ENCODE measurements at regions of chr20 and their contacts with region 1.

Region 1: DNA sequence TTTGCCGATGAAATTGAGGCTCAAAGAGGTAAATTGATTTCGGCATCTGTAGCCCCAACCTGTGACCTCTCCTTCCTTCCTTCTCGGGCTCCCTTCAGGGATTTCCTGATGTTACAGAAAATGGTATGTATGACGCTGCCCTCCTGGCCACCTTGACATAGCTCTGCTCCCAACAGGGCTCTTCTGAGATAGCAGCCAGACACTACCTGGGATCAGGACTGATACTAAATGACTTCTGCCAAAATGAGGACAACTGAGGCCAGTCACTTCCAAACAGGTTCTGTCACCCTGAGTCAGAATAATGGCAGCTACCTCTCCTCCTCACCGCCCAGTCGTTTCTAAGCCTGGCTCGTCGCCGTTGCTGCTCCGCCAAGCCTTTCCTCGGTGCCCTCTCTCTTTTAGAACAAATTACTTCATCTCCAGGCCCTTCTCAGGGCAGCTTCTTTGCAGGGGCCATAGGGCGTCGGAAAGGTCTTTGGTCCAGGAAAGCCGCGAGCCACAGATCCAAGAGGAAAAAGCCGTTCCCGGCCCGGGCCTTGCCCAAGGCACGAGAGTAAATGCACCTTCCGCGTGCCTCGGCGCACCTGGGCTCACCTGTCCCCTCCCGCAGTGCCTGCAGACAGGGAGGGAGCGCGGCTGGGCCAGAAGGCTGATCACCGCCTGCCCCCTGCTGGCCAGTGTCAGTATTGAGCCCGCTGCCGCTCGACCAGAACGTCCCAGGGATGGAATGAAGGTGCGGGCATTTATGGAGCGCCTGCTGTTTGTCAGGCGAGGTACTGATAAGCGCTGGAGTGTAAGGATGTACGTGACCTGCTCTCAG is 904 bp upstream of the LPIN3 start:
- DNase-seq: peak; percentile 85
- ATAC-seq: peak; percentile 90
- H3K4me3 Mint-ChIP-seq: peak overlapping the region; percentile 76
- H3K27ac Mint-ChIP-seq: peak overlapping the region; percentile 41
- H3K4me1 Mint-ChIP-seq: peaks cover 10% of the 10 kb centered on the region
- H3K27me3 Mint-ChIP-seq: peaks cover 4% of the 10 kb centered on the region
- CTCF ChIP-seq: peak; percentile 99

Region 2: GRCh38 chr20:40970201-40970600 is 369.5 kb before region 1 on chr20:
- CTCF ChIA-PET with region 1: interaction called, 3 read pairs
- POLR2A ChIA-PET with region 1: interaction called, 6 read pairs
- intact Hi-C with region 1: loop called (anchors 1 kb)
- DNase-seq: no peak
- ATAC-seq: no peak
- H3K4me3 Mint-ChIP-seq: no peak overlapping the region
- H3K27ac Mint-ChIP-seq: no peak overlapping the region
- H3K4me1 Mint-ChIP-seq: peaks cover 14% of the 10 kb centered on the region
- H3K27me3 Mint-ChIP-seq: peaks cover 2% of the 10 kb centered on the region
- CTCF ChIP-seq: no peak

Region 3: DNA sequence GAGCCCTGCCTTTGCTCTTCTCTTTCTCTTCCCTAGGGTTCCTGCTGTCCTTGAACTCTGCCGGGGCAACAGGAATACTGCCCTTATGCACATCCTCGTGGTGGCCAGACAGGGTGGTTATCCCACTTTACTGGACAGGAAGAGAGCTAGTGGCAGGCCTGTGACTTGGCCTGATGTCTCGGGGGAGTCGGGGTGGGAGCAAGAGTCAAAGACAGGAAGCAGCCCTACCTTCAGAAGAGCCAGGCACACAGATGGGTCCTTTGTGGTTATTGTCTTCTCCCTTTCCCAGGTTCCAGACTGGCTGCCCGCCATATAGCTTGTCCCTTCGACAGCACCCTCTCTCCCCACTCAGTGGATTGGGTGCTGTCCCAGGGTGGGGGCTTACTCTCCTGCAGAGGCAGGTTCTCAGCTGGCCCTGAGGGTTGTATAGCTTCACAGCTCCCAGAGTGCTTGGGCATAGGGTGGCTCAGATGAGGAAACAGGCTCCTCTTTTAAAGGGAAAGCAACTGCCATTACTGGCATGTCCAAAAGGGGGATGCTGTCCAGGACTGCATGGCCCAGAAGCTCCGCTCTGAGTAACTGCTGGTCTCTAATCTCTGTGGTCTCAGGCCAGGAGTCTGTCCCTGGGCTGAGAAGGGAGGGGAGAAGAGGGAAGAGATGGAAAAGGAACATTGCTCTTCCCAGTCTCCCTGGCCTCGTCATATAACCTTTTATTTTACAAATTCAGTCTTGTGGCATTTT is 185.1 kb before region 1 on chr20:
- CTCF ChIA-PET with region 1: interaction called, 17 read pairs
- POLR2A ChIA-PET with region 1: no interaction called
- intact Hi-C with region 1: no loop called
- DNase-seq: no peak
- ATAC-seq: no peak
- H3K4me3 Mint-ChIP-seq: no peak overlapping the region
- H3K27ac Mint-ChIP-seq: peak overlapping the region; percentile 80
- H3K4me1 Mint-ChIP-seq: peaks cover 72% of the 10 kb centered on the region
- H3K27me3 Mint-ChIP-seq: no peaks in the 10 kb centered on the region
- CTCF ChIP-seq: no peak

Region 4: GRCh38 chr20:41232973-41233926 is 106.5 kb before region 1 on chr20:
- CTCF ChIA-PET with region 1: interaction called, 16 read pairs
- POLR2A ChIA-PET with region 1: no interaction called
- intact Hi-C with region 1: loop called (anchors 1 kb)
- DNase-seq: no peak
- ATAC-seq: peak; percentile 56
- H3K4me3 Mint-ChIP-seq: no peak overlapping the region
- H3K27ac Mint-ChIP-seq: peak overlapping the region; percentile 36
- H3K4me1 Mint-ChIP-seq: peaks cover 26% of the 10 kb centered on the region
- H3K27me3 Mint-ChIP-seq: no peaks in the 10 kb centered on the region
- CTCF ChIP-seq: no peak

Region 5: GRCh38 chr20:41308290-41308711 is 31.4 kb before region 1 on chr20:
- CTCF ChIA-PET with region 1: interaction called, 21 read pairs
- POLR2A ChIA-PET with region 1: no interaction called
- intact Hi-C with region 1: no loop called
- DNase-seq: no peak
- ATAC-seq: no peak
- H3K4me3 Mint-ChIP-seq: no peak overlapping the region
- H3K27ac Mint-ChIP-seq: no peak overlapping the region
- H3K4me1 Mint-ChIP-seq: peaks cover 28% of the 10 kb centered on the region
- H3K27me3 Mint-ChIP-seq: no peaks in the 10 kb centered on the region
- CTCF ChIP-seq: no peak

Region 6: GRCh38 chr20:41411391-41411847 is 71.7 kb after region 1 on chr20:
- CTCF ChIA-PET with region 1: no interaction called
- POLR2A ChIA-PET with region 1: no interaction called
- intact Hi-C with region 1: loop called (anchors 2 kb)
- DNase-seq: no peak
- ATAC-seq: no peak
- H3K4me3 Mint-ChIP-seq: no peak overlapping the region
- H3K27ac Mint-ChIP-seq: no peak overlapping the region
- H3K4me1 Mint-ChIP-seq: no peaks in the 10 kb centered on the region
- H3K27me3 Mint-ChIP-seq: no peaks in the 10 kb centered on the region
- CTCF ChIP-seq: no peak

Region 7: DNA sequence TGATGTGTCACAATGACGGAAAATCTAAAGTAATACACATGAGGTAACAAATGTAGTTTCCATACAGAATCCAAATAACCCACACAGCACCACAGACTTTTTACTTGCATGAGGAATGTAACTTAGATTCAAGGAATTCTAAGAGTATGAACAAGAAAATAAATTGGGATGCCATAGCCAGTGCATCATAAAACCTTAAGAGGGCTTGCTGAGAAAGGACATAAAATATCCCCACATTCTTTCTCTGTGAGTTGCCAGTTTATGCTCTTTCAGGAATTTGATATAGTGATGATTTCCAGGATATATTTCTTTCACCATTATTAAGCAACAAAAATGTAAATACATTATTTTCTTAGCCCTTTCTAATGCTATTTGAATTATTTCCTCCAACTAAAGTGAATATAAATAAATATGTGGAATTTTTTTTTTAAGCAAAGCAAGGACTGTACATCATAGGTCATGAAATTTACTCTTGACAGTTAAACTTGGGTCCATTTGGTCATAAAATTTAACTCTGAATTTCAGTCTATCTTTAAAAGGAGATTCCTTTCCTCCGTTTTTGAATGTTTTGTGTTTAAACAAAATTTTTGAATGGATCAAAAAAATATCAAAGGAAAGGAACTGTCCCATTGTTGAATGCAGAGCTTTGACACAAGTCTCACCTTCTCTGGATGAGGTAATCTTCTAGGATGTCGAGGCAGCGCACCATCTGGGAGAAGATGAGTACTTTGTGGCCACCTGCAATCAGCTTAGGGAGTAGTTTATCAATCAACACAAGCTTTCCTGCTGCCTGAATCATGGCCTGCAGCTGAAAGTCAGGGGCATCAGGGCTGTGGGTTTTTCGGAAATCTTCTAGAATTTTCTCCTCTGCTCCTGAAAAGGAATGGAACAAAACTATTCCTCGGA is 143.2 kb after region 1 on chr20:
- CTCF ChIA-PET with region 1: no interaction called
- POLR2A ChIA-PET with region 1: no interaction called
- intact Hi-C with region 1: no loop called
- DNase-seq: no peak
- ATAC-seq: no peak
- H3K4me3 Mint-ChIP-seq: no peak overlapping the region
- H3K27ac Mint-ChIP-seq: no peak overlapping the region
- H3K4me1 Mint-ChIP-seq: peaks cover 10% of the 10 kb centered on the region
- H3K27me3 Mint-ChIP-seq: no peaks in the 10 kb centered on the region
- CTCF ChIP-seq: no peak